Activated CD8-positive, alpha-beta memory T cell treated with anti-CD3 and anti-CD28 coated beads, Interleukin-2, amount 10 ng/mL, durations not matched to agents 7 days and 5 days (primary cell): ENCODE measurements at regions of chr12 and their contacts with region 1.

Region 1: GRCh38 chr12:105053116-105053572 is 31.1 kb downstream of the ALDH1L2 start:
- DNase-seq: peak; percentile 87
- ATAC-seq: peak; percentile 88
- H3K4me3 Mint-ChIP-seq: no peak overlapping the region
- H3K27ac Mint-ChIP-seq: no peak overlapping the region
- H3K4me1 Mint-ChIP-seq: peaks cover 7% of the 10 kb centered on the region
- H3K27me3 Mint-ChIP-seq: peaks cover 7% of the 10 kb centered on the region

Region 2: DNA sequence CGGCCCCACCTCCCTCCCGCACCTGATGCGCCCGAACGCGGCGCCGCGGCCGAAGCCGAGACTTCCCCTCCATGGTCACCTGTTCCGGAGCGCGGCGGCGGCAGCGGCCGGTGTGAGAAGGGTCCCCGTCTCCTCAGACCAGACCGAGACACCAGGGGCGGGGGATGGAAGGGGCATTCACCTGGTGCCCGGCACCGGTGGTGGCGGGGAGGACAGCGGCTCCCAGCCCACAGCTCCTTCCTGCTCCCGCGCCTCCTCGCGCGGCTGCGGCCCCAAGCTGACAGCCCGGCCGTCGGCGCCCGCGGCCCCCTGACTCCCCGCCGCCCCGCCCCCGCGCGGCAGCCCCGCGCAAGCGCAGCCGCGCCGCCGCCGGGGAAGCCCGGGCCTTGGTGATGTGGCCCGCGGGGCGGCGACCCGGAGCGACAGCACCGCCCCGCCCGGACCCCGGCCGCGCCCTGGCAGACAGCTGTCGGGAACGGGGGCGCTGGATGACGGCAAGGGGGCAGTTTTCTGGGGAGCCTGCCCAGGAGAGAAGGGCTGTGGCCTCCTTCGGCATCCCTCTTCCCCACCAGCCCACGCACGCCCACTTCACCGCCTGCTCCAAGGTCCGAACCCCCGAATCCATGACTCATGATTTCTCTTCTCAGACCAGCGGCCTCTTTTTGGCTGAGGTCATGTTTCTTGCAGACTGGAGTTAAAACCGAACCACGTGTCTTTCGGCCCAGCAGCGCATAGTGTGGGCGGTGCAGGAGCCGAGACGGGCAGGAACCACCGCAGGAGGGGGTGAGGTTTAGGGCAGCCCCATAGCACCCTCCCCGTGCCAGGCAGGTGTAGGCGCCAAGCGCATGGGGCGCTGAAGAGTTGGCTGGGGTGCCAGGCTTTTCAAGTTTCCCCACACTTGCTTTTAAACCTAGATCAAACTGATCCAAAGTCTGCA is 94.9 kb before region 1 on chr12 and contains the start of gene SLC41A2:
- CTCF ChIA-PET with region 1: interaction called, 18 read pairs
- DNase-seq: peak; percentile 82
- ATAC-seq: peak; percentile 91
- H3K4me3 Mint-ChIP-seq: peak within 1 kb of the TSS; percentile 81
- H3K27ac Mint-ChIP-seq: peak within 1 kb of the TSS; percentile 73
- H3K4me1 Mint-ChIP-seq: peaks cover 23% of the 10 kb centered on the region
- H3K27me3 Mint-ChIP-seq: peaks cover 53% of the 10 kb centered on the region
- total RNA-seq, gene SLC41A2: 6.3 to 14.8 TPM